Transverse colon (tissue), 4 donors: ENCODE measurements at regions of chr1 and their contacts with region 1.

Region 1: DNA sequence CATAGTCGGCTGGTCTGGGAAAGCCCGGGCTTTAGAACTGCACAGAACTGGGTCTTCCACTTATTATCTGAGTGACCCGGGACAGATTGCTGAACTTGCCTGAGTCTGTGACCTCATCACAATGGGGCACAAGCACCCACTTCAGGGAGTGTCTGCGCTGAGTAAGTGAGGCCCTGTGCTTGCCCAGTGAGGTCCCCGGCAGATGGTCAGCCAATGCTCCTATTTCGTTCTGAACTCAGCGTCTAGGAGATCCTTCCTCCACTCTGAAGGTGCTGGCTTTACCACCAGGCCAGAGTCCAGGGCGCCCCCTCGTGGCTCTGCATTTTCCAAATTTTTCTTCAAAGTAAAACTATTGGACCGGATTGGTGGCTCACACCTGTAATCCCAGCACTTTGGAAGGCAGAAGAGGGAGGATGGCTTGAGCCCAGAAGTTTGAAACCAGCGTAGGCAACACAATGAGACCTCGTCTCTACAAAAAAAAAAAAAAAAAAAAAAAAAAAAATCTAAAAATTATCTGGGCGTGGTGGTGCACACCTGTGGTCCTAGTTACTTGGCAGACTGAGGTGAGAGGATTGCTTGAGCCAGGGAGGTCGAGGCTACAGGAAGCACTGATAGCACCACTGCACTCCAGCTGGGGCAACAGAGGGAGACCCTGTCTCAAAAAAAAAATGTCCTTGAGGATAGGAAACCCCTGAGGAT is 61.7 kb downstream of the FCRL5 start:
- DNase-seq: peak; percentile 88
- H3K4me3 ChIP-seq: no peak overlapping the region
- H3K27ac ChIP-seq: no peak overlapping the region
- H3K4me1 ChIP-seq: peaks cover 0 to 4% (median 0%) of the 10 kb centered on the region in 4 donors
- H3K27me3 ChIP-seq: no peaks in the 10 kb centered on the region
- CTCF ChIP-seq: peak; percentile 46 to 69 (median 65)
- EP300 ChIP-seq: no peak
- POLR2A ChIP-seq: no peak

Region 2: GRCh38 chr1:157090196-157090647 is 400.4 kb before region 1 on chr1:
- in situ Hi-C with region 1: loop called in 1 of 4 experiments (anchors 25 kb)
- intact Hi-C with region 1: no loop called
- DNase-seq: peak; percentile 89
- H3K4me3 ChIP-seq: no peak overlapping the region
- H3K27ac ChIP-seq: no peak overlapping the region
- H3K4me1 ChIP-seq: peaks cover 0 to 7% (median 0%) of the 10 kb centered on the region in 4 donors
- H3K27me3 ChIP-seq: no peaks in the 10 kb centered on the region
- CTCF ChIP-seq: peak; percentile 93 to 97 (median 95)
- EP300 ChIP-seq: no peak
- POLR2A ChIP-seq: no peak

Region 3: GRCh38 chr1:157163273-157164127 is 327.1 kb before region 1 on chr1:
- in situ Hi-C with region 1: loop called in 1 of 4 experiments (anchors 10 kb)
- intact Hi-C with region 1: loop called (anchors 10 kb)
- DNase-seq: peak; percentile 80
- H3K4me3 ChIP-seq: no peak overlapping the region
- H3K27ac ChIP-seq: no peak overlapping the region
- H3K4me1 ChIP-seq: no peaks in the 10 kb centered on the region
- H3K27me3 ChIP-seq: peaks cover 5% of the 10 kb centered on the region
- CTCF ChIP-seq: peak; percentile 65 to 94 (median 92)
- EP300 ChIP-seq: no peak
- POLR2A ChIP-seq: no peak

Region 4: GRCh38 chr1:157193702-157194391 is 296.8 kb before region 1 on chr1:
- in situ Hi-C with region 1: loop called in 2 of 4 experiments (anchors 10 kb)
- intact Hi-C with region 1: loop called (anchors 10 kb)
- DNase-seq: peak; percentile 75
- H3K4me3 ChIP-seq: no peak overlapping the region
- H3K27ac ChIP-seq: no peak overlapping the region
- H3K4me1 ChIP-seq: no peaks in the 10 kb centered on the region
- H3K27me3 ChIP-seq: peaks cover 9% of the 10 kb centered on the region
- CTCF ChIP-seq: peak; percentile 53 to 72 (median 61)
- EP300 ChIP-seq: no peak
- POLR2A ChIP-seq: no peak

Region 5: DNA sequence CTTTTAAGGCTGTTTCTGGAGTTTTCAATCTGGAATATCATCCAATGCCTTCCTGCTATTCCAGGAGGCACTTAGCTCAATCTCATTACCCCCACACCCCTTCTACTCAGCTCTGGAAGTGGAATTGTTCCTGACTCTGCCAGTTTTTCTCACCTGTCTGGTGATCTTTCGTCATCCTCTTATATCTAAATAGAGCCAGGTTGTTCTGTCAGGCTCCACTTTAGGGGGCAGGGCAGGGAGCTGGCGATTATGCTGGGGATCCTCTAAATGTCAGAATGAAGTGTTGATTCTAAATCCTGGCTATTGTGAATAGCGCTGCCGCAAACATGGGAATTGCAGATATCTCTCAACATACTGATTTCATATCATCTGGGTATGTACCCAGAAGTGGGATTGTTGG is 288.8 kb before region 1 on chr1:
- in situ Hi-C with region 1: loop called (anchors 10 to 25 kb)
- intact Hi-C with region 1: loop called (anchors 10 kb)
- DNase-seq: no peak
- H3K4me3 ChIP-seq: no peak overlapping the region
- H3K27ac ChIP-seq: no peak overlapping the region
- H3K4me1 ChIP-seq: no peaks in the 10 kb centered on the region
- H3K27me3 ChIP-seq: peaks cover 4% of the 10 kb centered on the region
- CTCF ChIP-seq: no peak
- EP300 ChIP-seq: no peak
- POLR2A ChIP-seq: no peak

Region 6: DNA sequence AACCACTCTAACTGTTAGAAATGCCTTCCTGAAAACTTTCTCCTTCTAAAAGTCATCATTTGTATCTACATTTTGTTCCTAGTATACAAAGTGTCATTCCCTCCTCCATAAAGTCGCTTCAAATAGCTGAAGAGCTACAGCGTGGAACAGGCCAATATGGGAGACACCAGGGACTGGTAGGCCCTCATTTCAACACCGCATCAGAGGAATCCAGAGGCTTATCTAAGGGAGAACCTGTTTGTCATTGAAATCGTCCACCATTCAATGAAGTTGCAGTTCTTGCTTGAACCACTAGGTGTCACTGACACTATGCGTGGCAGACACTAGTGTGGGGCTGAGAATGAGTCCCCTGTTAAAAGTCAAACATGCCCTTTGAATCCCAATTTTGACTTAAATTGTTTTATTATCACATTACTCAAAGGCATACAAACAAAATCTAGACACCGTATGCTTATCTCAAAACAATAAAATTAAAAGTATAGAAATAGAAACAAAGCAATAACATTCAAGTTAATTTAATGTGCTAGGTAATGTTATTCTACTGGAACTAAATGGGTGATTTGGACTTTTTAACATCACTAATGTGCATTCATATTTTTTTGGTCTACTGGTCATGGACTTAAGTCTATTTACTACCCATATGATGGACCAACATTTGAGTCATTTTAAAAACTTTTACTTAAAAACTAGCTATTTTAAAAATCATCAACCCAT is 120.7 kb before region 1 on chr1:
- in situ Hi-C with region 1: loop called (anchors 5 to 10 kb)
- intact Hi-C with region 1: loop called (anchors 5 kb)
- DNase-seq: peak; percentile 64
- H3K4me3 ChIP-seq: no peak overlapping the region
- H3K27ac ChIP-seq: no peak overlapping the region
- H3K4me1 ChIP-seq: peaks cover 0 to 43% (median 17%) of the 10 kb centered on the region in 4 donors
- H3K27me3 ChIP-seq: no peaks in the 10 kb centered on the region
- CTCF ChIP-seq: peak; percentile 84 to 94 (median 92)
- EP300 ChIP-seq: no peak
- POLR2A ChIP-seq: no peak

Region 7: GRCh38 chr1:158285756-158286241 is 795.2 kb after region 1 on chr1:
- in situ Hi-C with region 1: no loop called
- intact Hi-C with region 1: no loop called
- DNase-seq: peak; percentile 35
- H3K4me3 ChIP-seq: no peak overlapping the region
- H3K27ac ChIP-seq: peak overlapping the region in 3 of 4 donors; percentile 12 to 48 (median 37)
- H3K4me1 ChIP-seq: no peaks in the 10 kb centered on the region
- H3K27me3 ChIP-seq: no peaks in the 10 kb centered on the region
- CTCF ChIP-seq: no peak
- EP300 ChIP-seq: no peak
- POLR2A ChIP-seq: no peak